Body of pancreas (tissue), 4 donors: ENCODE measurements at regions of chr2 and their contacts with region 1.

Region 1: DNA sequence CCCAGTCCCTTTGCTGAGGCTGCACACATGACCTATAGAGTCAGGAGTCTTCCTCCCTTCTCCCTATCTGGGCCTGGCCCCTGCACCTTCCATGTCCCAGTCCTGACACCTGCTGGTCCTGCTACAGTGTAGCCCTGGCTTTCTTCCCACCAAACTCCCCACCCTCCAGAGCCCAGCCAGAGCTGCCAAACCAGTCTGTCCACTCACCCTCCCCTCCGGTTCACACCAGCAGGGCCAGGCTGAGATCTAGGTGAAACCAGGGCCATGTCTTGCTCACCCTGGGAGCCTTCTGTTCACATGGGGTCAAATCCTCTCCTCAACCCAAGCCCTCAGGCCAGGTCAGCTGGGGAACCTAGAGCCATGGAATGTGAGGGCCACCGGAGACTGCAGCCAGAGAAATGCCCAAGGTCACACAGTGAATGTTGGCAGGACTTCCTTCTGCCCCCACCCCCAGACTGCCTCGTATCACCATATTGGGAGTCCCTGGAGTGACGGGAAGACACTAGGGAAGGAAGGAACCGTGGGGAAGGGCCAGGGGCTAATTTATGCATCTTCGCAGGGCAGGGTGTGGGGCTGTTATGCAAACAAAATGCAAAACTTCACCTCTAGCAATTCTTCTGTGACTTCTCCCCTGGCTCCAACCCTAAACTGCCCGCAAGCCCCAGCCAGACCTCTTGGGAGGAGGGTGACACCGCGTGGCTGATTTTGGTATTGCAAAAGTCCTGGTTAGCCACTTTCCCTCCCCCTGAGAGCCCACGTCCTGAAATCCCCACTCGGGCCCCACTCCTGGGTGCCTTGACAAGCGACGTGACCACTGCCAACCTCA is 14.6 kb downstream of the TNS1 start:
- DNase-seq: peak; percentile 96 to 98 (median 97)
- ATAC-seq: peak; percentile 96
- H3K4me3 ChIP-seq: no peak overlapping the region
- H3K27ac ChIP-seq: peak overlapping the region; percentile 82 to 97 (median 87)
- H3K4me1 ChIP-seq: peaks cover 60% of the 10 kb centered on the region
- H3K27me3 ChIP-seq: no peaks in the 10 kb centered on the region
- CTCF ChIP-seq: peak; percentile 74 to 93 (median 90)
- POLR2A ChIP-seq: peak in 1 of 3 donors; percentile 22

Region 2: GRCh38 chr2:216465580-216466197 is 1522.5 kb before region 1 on chr2:
- intact Hi-C with region 1: no loop called
- DNase-seq: no peak
- ATAC-seq: no peak
- H3K4me3 ChIP-seq: no peak overlapping the region
- H3K27ac ChIP-seq: no peak overlapping the region
- H3K4me1 ChIP-seq: no peaks in the 10 kb centered on the region
- H3K27me3 ChIP-seq: no peaks in the 10 kb centered on the region
- CTCF ChIP-seq: no peak
- POLR2A ChIP-seq: no peak

Region 3: GRCh38 chr2:217886720-217887309 is 101.4 kb before region 1 on chr2:
- intact Hi-C with region 1: loop called (anchors 5 kb)
- DNase-seq: peak; percentile 71 to 81 (median 76)
- ATAC-seq: peak; percentile 70
- H3K4me3 ChIP-seq: no peak overlapping the region
- H3K27ac ChIP-seq: no peak overlapping the region
- H3K4me1 ChIP-seq: peaks cover 15% of the 10 kb centered on the region
- H3K27me3 ChIP-seq: no peaks in the 10 kb centered on the region
- CTCF ChIP-seq: peak; percentile 48 to 84 (median 68)
- POLR2A ChIP-seq: no peak